Heart right ventricle (tissue), 16 donors: ENCODE measurements at regions of chr6 and their contacts with region 1.

Region 1: GRCh38 chr6:56851541-56852259 is 103.2 kb upstream of the BEND6 start:
- DNase-seq: peak in 1 of 2 donors; percentile 80
- ATAC-seq: peak; percentile 75 to 96 (median 92)
- H3K4me3 ChIP-seq: peak overlapping the region; percentile 16 to 60 (median 52)
- H3K27ac ChIP-seq: peak overlapping the region in 9 of 10 donors; percentile 41 to 81 (median 66)
- H3K4me1 ChIP-seq: peaks cover 0 to 43% (median 27%) of the 10 kb centered on the region in 9 donors
- H3K27me3 ChIP-seq: no peaks in the 10 kb centered on the region
- CTCF ChIP-seq: peak; percentile 20 to 81 (median 68)

Region 2: DNA sequence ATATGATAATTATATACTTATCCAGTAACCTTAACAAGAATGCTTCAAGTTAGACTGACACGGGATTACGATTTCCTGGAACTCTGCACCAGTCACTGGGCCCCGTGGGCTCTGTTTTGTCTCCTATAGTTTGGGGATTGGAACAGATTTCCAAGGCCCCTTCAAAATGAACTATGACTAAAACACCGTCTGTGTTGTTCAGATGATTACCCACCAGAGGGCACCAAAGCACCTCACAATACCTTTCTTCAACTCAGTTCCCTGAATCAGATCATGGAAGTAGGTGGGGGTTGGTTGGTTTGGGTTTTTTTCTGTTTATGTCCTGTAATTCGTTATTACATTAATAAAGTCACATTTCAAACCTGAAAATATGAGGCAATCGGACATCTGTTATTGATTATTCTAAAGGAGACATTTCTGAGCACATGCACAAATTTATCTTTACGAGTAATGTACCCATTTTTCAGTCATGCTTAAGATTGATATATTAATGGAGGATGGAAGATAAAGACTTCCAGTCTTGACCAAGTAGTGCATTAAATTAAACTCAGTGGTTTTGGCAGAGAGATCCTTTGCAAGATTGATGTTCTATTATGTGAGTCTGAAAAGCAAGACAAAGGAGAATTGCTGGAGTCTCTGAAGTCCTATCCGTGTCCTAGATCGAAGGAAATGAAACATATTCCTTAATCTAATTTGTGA is 492.4 kb before region 1 on chr6:
- intact Hi-C with region 1: loop called in 3 of 10 experiments (anchors 10 kb)
- DNase-seq: peak in 1 of 2 donors; percentile 73
- ATAC-seq: peak; percentile 58 to 81 (median 72)
- H3K4me3 ChIP-seq: no peak overlapping the region
- H3K27ac ChIP-seq: no peak overlapping the region
- H3K4me1 ChIP-seq: peaks cover 0 to 17% (median 0%) of the 10 kb centered on the region in 9 donors
- H3K27me3 ChIP-seq: no peaks in the 10 kb centered on the region
- CTCF ChIP-seq: peak; percentile 74 to 90 (median 85)

Region 3: GRCh38 chr6:56364827-56365313 is 486.8 kb before region 1 on chr6:
- intact Hi-C with region 1: loop called in 3 of 10 experiments (anchors 10 kb)
- DNase-seq: no peak
- ATAC-seq: no peak
- H3K4me3 ChIP-seq: no peak overlapping the region
- H3K27ac ChIP-seq: peak overlapping the region in 1 of 10 donors; percentile 10
- H3K4me1 ChIP-seq: peaks cover 0 to 52% (median 35%) of the 10 kb centered on the region in 9 donors
- H3K27me3 ChIP-seq: no peaks in the 10 kb centered on the region
- CTCF ChIP-seq: no peak

Region 4: GRCh38 chr6:56370561-56371211 is 481.0 kb before region 1 on chr6:
- intact Hi-C with region 1: loop called in 3 of 10 experiments (anchors 10 kb)
- DNase-seq: peak in 1 of 2 donors; percentile 74
- ATAC-seq: peak; percentile 74 to 90 (median 84)
- H3K4me3 ChIP-seq: peak overlapping the region in 1 of 10 donors; percentile 20
- H3K27ac ChIP-seq: peak overlapping the region; percentile 21 to 88 (median 79)
- H3K4me1 ChIP-seq: peaks cover 13 to 91% (median 66%) of the 10 kb centered on the region in 9 donors
- H3K27me3 ChIP-seq: no peaks in the 10 kb centered on the region
- CTCF ChIP-seq: no peak

Region 5: GRCh38 chr6:56637640-56638039 is 214.1 kb before region 1 on chr6:
- intact Hi-C with region 1: loop called in 9 of 10 experiments (anchors 5 kb)
- DNase-seq: no peak
- ATAC-seq: peak in 7 of 8 donors; percentile 55 to 71 (median 66)
- H3K4me3 ChIP-seq: no peak overlapping the region
- H3K27ac ChIP-seq: peak overlapping the region in 1 of 10 donors; percentile 55
- H3K4me1 ChIP-seq: peaks cover 0 to 14% (median 3%) of the 10 kb centered on the region in 9 donors
- H3K27me3 ChIP-seq: no peaks in the 10 kb centered on the region
- CTCF ChIP-seq: peak in 8 of 9 donors; percentile 59 to 85 (median 76)

Region 6: GRCh38 chr6:56708810-56709597 is 142.7 kb before region 1 on chr6:
- intact Hi-C with region 1: loop called (anchors 2 to 5 kb)
- DNase-seq: no peak
- ATAC-seq: peak in 7 of 8 donors; percentile 17 to 51 (median 31)
- H3K4me3 ChIP-seq: peak overlapping the region in 1 of 10 donors; percentile 9
- H3K27ac ChIP-seq: peak overlapping the region in 7 of 10 donors; percentile 13 to 69 (median 37)
- H3K4me1 ChIP-seq: peaks cover 0 to 48% (median 39%) of the 10 kb centered on the region in 9 donors
- H3K27me3 ChIP-seq: no peaks in the 10 kb centered on the region
- CTCF ChIP-seq: peak; percentile 50 to 79 (median 71)

Region 7: GRCh38 chr6:56764081-56764566 is 87.6 kb before region 1 on chr6:
- intact Hi-C with region 1: loop called in 3 of 10 experiments (anchors 5 kb)
- DNase-seq: no peak
- ATAC-seq: peak in 7 of 8 donors; percentile 23 to 75 (median 66)
- H3K4me3 ChIP-seq: no peak overlapping the region
- H3K27ac ChIP-seq: peak overlapping the region in 2 of 10 donors; percentile 1 to 27
- H3K4me1 ChIP-seq: peaks cover 3 to 58% (median 37%) of the 10 kb centered on the region in 9 donors
- H3K27me3 ChIP-seq: no peaks in the 10 kb centered on the region
- CTCF ChIP-seq: peak in 6 of 9 donors; percentile 16 to 48 (median 41)